Activated CD4-positive, alpha-beta T cell treated with anti-CD3 and anti-CD28 coated beads for 36 hours (primary cell): ENCODE measurements at regions of chr7 and their contacts with region 1.

Region 1: DNA sequence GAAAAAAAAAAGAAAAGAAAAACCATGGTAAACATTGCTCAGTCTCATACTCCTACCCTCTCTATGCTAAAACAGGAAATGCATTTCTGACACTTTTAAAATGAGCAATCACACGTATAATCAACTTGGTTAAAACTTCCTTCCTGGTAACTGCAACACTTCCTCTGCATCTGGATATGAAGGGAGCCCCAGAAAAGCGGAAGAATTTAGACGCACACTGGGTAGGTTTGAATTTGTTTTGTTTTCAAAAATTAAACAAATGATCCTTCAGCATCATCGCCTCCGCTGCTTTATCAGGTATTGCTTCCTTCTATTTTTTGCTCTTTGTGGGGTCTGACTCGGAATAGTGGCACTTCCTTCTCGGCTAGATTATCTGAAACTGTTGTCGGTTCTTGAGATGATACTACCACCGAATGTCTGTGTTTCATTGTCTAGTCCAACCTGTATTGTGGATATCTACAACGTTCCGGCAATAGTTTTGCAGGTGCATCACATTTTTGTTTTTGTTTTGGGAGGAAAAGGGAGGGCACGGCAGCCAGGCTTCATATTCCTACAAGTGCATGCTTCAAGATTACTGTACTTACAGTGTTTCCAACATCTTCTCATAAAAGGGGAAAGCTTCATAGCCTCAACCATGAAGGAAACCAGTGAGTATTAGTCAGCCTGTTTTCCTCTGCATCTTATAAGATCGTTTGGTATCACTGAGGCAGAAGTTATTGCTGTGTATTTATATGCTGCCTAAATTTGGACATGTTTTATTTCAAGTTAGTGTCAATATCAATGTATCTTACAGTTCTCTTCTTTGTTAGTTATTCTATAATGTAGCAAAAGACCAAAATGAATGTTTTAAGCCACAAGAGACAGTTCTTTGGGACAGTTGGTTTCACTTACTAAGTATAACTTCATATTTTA is at the start of gene PIK3CG:
- DNase-seq: no peak
- ATAC-seq: peak; percentile 79
- H3K4me3 Mint-ChIP-seq: peak within 1 kb of the TSS; percentile 83
- H3K27ac Mint-ChIP-seq: peak within 1 kb of the TSS; percentile 92
- H3K4me1 Mint-ChIP-seq: peaks cover 75% of the 10 kb centered on the region
- H3K27me3 Mint-ChIP-seq: no peaks in the 10 kb centered on the region
- total RNA-seq, gene PIK3CG: 9.9 to 14.3 TPM

Region 2: GRCh38 chr7:106772655-106773108 is 92.7 kb before region 1 on chr7:
- CTCF ChIA-PET with region 1: interaction called, 3 read pairs
- POLR2A ChIA-PET with region 1: no interaction called
- intact Hi-C with region 1: loop called (anchors 1 to 5 kb)
- DNase-seq: no peak
- ATAC-seq: peak; percentile 79
- H3K4me3 Mint-ChIP-seq: peak overlapping the region; percentile 27
- H3K27ac Mint-ChIP-seq: peak overlapping the region; percentile 91
- H3K4me1 Mint-ChIP-seq: peaks cover 66% of the 10 kb centered on the region
- H3K27me3 Mint-ChIP-seq: no peaks in the 10 kb centered on the region

Region 3: DNA sequence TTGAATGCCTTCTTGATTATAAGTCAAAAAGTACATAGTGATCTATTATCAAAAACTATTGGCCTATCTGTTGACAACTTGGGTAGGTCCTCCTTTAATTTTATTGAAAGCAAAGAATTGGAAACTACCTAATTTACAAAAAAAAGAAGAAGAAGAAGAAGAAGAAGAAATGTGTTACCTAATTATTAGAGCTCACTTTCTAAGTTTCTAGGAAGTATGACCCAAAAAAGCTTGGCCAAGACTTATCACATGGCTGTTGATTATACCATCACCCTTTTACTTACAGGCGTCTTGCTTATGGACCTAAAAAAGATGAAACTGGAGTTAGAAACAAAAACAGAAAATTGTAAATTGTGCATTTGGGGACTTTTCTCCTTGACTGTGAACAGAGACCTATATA is 82.1 kb before region 1 on chr7:
- CTCF ChIA-PET with region 1: no interaction called
- POLR2A ChIA-PET with region 1: no interaction called
- intact Hi-C with region 1: no loop called
- DNase-seq: no peak
- ATAC-seq: no peak
- H3K4me3 Mint-ChIP-seq: no peak overlapping the region
- H3K27ac Mint-ChIP-seq: no peak overlapping the region
- H3K4me1 Mint-ChIP-seq: no peaks in the 10 kb centered on the region
- H3K27me3 Mint-ChIP-seq: no peaks in the 10 kb centered on the region

Region 4: GRCh38 chr7:107810626-107811025 is 945.2 kb after region 1 on chr7:
- CTCF ChIA-PET with region 1: no interaction called
- POLR2A ChIA-PET with region 1: no interaction called
- intact Hi-C with region 1: loop called in 1 of 2 experiments (anchors 5 kb)
- DNase-seq: peak; percentile 21
- ATAC-seq: no peak
- H3K4me3 Mint-ChIP-seq: no peak overlapping the region
- H3K27ac Mint-ChIP-seq: no peak overlapping the region
- H3K4me1 Mint-ChIP-seq: peaks cover 27% of the 10 kb centered on the region
- H3K27me3 Mint-ChIP-seq: no peaks in the 10 kb centered on the region